Cardiac septum (tissue), 1 donor: ENCODE measurements at regions of chr2 and their contacts with region 1.

Region 1: GRCh38 chr2:219294356-219295351 is 14.5 kb downstream of the PTPRN start:
- DNase-seq: peak; percentile 97

Region 2: GRCh38 chr2:218852911-218853667 is 441.6 kb before region 1 on chr2:
- intact Hi-C with region 1: no loop called
- DNase-seq: no peak

Region 3: GRCh38 chr2:219160186-219161017 is 134.3 kb before region 1 on chr2 and contains the start of gene NHEJ1:
- intact Hi-C with region 1: loop called (anchors 1 kb)
- DNase-seq: peak; percentile 97
- total RNA-seq, gene NHEJ1: 6.7 TPM

Region 4: GRCh38 chr2:219229305-219230058 is 65.2 kb before region 1 on chr2 and contains the starts of genes ANKZF1 and ATG9A:
- intact Hi-C with region 1: loop called (anchors 5 kb)
- DNase-seq: peak; percentile 100
- total RNA-seq, gene ANKZF1: 22.4 TPM
- total RNA-seq, gene ATG9A: 66.3 TPM

Region 5: GRCh38 chr2:219245148-219245898 is 49.3 kb before region 1 on chr2 and contains the starts of genes GLB1L and STK16:
- intact Hi-C with region 1: loop called (anchors 5 kb)
- DNase-seq: peak; percentile 98
- total RNA-seq, gene GLB1L: 2.0 TPM
- total RNA-seq, gene STK16: 16.3 TPM

Region 6: GRCh38 chr2:219278655-219279516 is 15.8 kb before region 1 on chr2 and contains the start of gene DNAJB2:
- intact Hi-C with region 1: loop called (anchors 1 kb)
- DNase-seq: peak; percentile 100
- total RNA-seq, gene DNAJB2: 78.0 TPM